CD8-positive, alpha-beta T cell (primary cell): ENCODE measurements at regions of chr16 and their contacts with region 1.

Region 1: GRCh38 chr16:48164907-48165726 is 9.3 kb upstream of the ABCC12 start:
- DNase-seq: peak; percentile 40 to 80 (median 66)
- ATAC-seq: no peak
- H3K4me3 ChIP-seq: no peak overlapping the region
- H3K4me3 Mint-ChIP-seq: no peak overlapping the region
- H3K27ac ChIP-seq: no peak overlapping the region
- H3K27ac Mint-ChIP-seq: no peak overlapping the region
- H3K4me1 ChIP-seq: no peaks in the 10 kb centered on the region
- H3K4me1 Mint-ChIP-seq: peaks cover 4% of the 10 kb centered on the region
- H3K27me3 ChIP-seq: no peaks in the 10 kb centered on the region
- H3K27me3 Mint-ChIP-seq: peaks cover 8% of the 10 kb centered on the region
- CTCF ChIP-seq: peak; percentile 83

Region 2: DNA sequence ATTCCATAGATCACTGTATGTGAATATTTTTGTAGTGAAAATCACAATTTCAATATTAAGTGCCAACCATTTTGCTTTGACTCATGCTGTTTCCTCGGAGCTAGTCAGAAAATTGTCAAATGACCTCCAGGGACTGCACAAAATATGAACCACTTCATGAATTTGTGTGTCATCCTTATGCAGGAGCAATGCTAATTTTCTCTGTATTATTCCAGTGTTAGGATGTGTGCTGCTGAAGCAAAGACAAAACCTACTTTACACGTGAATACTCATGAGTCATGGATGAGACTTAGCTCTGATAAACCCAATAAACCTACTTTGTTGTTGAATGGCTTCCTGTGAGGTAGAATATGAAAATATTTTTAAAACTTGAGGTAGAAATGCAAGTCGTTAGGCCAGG is 1609.2 kb before region 1 on chr16:
- CTCF ChIA-PET with region 1: interaction called, 5 read pairs
- POLR2A ChIA-PET with region 1: no interaction called
- intact Hi-C with region 1: loop called in 1 of 2 experiments (anchors 10 kb)
- DNase-seq: no peak
- ATAC-seq: no peak
- H3K4me3 ChIP-seq: no peak overlapping the region
- H3K4me3 Mint-ChIP-seq: no peak overlapping the region
- H3K27ac ChIP-seq: no peak overlapping the region
- H3K27ac Mint-ChIP-seq: no peak overlapping the region
- H3K4me1 ChIP-seq: no peaks in the 10 kb centered on the region
- H3K4me1 Mint-ChIP-seq: peaks cover 6% of the 10 kb centered on the region
- H3K27me3 ChIP-seq: no peaks in the 10 kb centered on the region
- H3K27me3 Mint-ChIP-seq: peaks cover 17% of the 10 kb centered on the region
- CTCF ChIP-seq: no peak

Region 3: DNA sequence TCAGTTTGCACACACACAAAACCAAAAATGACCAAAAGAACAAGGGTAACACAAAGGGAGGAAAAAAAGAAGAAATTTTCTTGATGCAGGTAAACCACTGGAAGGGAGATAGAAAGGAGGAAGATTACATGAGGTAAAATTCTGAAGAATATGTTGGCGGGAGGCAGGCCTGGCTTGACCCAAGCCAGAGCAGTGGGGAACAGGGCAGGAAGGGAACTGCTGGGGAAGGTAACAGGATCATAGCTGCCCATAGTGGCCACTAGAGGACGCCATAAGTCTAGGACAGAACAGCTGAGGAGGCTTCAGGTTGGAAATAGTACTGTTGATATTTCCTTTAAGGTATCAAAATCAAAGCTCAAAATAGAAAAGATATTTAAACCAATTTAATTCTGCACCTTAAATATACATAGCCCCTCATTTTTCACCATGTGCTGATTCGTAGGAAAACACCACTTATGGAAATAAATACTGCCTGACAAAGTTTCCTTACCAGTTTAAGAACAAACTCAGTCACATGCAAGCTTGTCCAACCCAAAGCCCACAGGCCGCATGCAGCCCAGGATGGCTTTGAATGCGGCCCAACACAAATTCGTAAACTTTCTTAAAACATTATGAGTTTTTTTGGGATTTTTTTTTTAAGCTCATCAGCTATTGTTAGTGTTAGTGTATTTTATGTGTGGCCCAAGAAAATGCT is 1491.7 kb before region 1 on chr16:
- CTCF ChIA-PET with region 1: no interaction called
- POLR2A ChIA-PET with region 1: no interaction called
- intact Hi-C with region 1: loop called in 1 of 2 experiments (anchors 10 kb)
- DNase-seq: peak in 8 of 9 experiments; percentile 17 to 76 (median 48)
- ATAC-seq: peak; percentile 95
- H3K4me3 ChIP-seq: no peak overlapping the region
- H3K4me3 Mint-ChIP-seq: no peak overlapping the region
- H3K27ac ChIP-seq: no peak overlapping the region
- H3K27ac Mint-ChIP-seq: no peak overlapping the region
- H3K4me1 ChIP-seq: no peaks in the 10 kb centered on the region
- H3K4me1 Mint-ChIP-seq: peaks cover 2% of the 10 kb centered on the region
- H3K27me3 ChIP-seq: no peaks in the 10 kb centered on the region
- H3K27me3 Mint-ChIP-seq: no peaks in the 10 kb centered on the region
- CTCF ChIP-seq: peak; percentile 95

Region 4: GRCh38 chr16:46947900-46948547 is 1217.1 kb before region 1 on chr16:
- CTCF ChIA-PET with region 1: interaction called, 12 read pairs
- POLR2A ChIA-PET with region 1: no interaction called
- intact Hi-C with region 1: loop called (anchors 1 kb)
- DNase-seq: peak in 4 of 9 experiments; percentile 24 to 63 (median 44)
- ATAC-seq: peak; percentile 72
- H3K4me3 ChIP-seq: no peak overlapping the region
- H3K4me3 Mint-ChIP-seq: no peak overlapping the region
- H3K27ac ChIP-seq: no peak overlapping the region
- H3K27ac Mint-ChIP-seq: no peak overlapping the region
- H3K4me1 ChIP-seq: no peaks in the 10 kb centered on the region
- H3K4me1 Mint-ChIP-seq: peaks cover 1% of the 10 kb centered on the region
- H3K27me3 ChIP-seq: no peaks in the 10 kb centered on the region
- H3K27me3 Mint-ChIP-seq: no peaks in the 10 kb centered on the region
- CTCF ChIP-seq: peak; percentile 71

Region 5: GRCh38 chr16:47037746-47038458 is 1127.2 kb before region 1 on chr16:
- CTCF ChIA-PET with region 1: interaction called, 13 read pairs
- POLR2A ChIA-PET with region 1: interaction called, 3 read pairs
- intact Hi-C with region 1: loop called (anchors 1 to 2 kb)
- DNase-seq: peak; percentile 80 to 95 (median 88)
- ATAC-seq: peak; percentile 98
- H3K4me3 ChIP-seq: peak overlapping the region; percentile 65 to 72
- H3K4me3 Mint-ChIP-seq: peak overlapping the region; percentile 79
- H3K27ac ChIP-seq: no peak overlapping the region
- H3K27ac Mint-ChIP-seq: no peak overlapping the region
- H3K4me1 ChIP-seq: peaks cover 7% of the 10 kb centered on the region
- H3K4me1 Mint-ChIP-seq: peaks cover 5% of the 10 kb centered on the region
- H3K27me3 ChIP-seq: peaks cover 0 to 12% of the 10 kb centered on the region in 2 experiments
- H3K27me3 Mint-ChIP-seq: peaks cover 3% of the 10 kb centered on the region
- CTCF ChIP-seq: peak; percentile 88

Region 6: DNA sequence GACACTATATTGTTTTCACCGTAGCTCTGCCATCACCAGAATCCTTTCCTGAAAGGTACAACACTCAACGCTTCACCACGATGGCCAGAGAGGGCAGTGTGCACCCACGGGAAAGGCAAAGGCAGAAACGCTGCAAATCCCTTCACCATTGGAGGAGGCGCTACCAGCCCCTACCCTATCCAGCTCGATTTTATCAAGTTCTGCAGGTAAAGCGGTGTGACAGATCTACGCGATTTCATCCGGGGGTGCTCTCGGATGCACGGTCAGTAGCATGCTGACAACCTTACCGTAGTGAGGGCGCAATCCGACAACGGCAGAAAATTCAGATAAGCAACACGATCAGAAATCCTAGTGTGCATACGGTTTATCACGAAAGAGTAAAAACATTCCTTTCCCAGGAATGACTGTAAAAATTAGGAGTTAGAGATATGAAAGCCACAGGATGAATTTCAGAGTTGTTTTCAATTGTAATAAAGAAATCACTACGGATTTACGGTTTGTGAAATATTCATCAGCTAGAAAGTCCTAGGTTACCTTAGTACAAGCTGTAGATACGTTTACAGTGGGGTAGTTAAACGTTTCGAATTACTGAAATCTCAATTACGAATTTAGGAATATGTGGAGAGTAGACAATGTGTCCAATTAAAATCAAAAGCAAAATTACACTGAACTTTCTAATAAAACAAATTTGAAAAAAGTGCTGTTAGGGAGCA is 1023.2 kb before region 1 on chr16:
- CTCF ChIA-PET with region 1: interaction called, 36 read pairs
- POLR2A ChIA-PET with region 1: no interaction called
- intact Hi-C with region 1: loop called (anchors 2 kb)
- DNase-seq: peak; percentile 63 to 87 (median 80)
- ATAC-seq: peak; percentile 77
- H3K4me3 ChIP-seq: peak overlapping the region; percentile 3 to 28
- H3K4me3 Mint-ChIP-seq: peak overlapping the region; percentile 76
- H3K27ac ChIP-seq: no peak overlapping the region
- H3K27ac Mint-ChIP-seq: no peak overlapping the region
- H3K4me1 ChIP-seq: peaks cover 12% of the 10 kb centered on the region
- H3K4me1 Mint-ChIP-seq: peaks cover 21% of the 10 kb centered on the region
- H3K27me3 ChIP-seq: peaks cover 3 to 5% of the 10 kb centered on the region in 2 experiments
- H3K27me3 Mint-ChIP-seq: peaks cover 22% of the 10 kb centered on the region
- CTCF ChIP-seq: peak; percentile 85

Region 7: DNA sequence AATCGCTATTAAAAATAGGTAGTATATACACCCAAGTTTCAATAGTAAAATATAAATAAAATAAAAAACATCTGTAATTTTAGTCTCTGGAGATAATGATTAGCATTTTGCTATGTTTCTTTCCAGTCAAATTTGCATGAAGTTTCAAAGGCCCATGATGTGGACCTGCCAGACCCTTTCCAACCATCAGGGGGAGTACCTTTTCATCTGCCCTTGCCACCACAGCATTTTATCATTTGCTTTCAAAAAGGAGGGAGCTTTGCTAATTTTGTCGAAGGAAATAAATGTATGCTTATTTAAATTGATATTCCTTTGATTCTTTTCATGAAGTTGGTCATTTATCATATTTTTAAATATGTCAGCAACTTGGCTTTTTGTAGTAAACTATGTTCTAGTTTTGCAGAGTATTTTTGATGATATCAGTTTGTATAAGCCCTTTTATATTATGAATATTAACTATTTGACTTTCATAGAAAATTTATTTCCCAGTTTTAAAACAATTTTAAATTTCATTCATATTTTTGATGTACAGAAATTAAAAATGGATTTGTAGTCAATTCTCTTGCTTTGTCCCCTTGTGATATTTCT is 906.1 kb before region 1 on chr16:
- CTCF ChIA-PET with region 1: no interaction called
- POLR2A ChIA-PET with region 1: no interaction called
- intact Hi-C with region 1: loop called in 1 of 2 experiments (anchors 2 kb)
- DNase-seq: peak in 2 of 9 experiments; percentile 16 to 18
- ATAC-seq: no peak
- H3K4me3 ChIP-seq: no peak overlapping the region
- H3K4me3 Mint-ChIP-seq: no peak overlapping the region
- H3K27ac ChIP-seq: no peak overlapping the region
- H3K27ac Mint-ChIP-seq: no peak overlapping the region
- H3K4me1 ChIP-seq: no peaks in the 10 kb centered on the region
- H3K4me1 Mint-ChIP-seq: no peaks in the 10 kb centered on the region
- H3K27me3 ChIP-seq: no peaks in the 10 kb centered on the region
- H3K27me3 Mint-ChIP-seq: no peaks in the 10 kb centered on the region
- CTCF ChIP-seq: peak; percentile 48

Region 8: GRCh38 chr16:47939690-47940089 is 225.4 kb before region 1 on chr16:
- CTCF ChIA-PET with region 1: no interaction called
- POLR2A ChIA-PET with region 1: no interaction called
- intact Hi-C with region 1: no loop called
- DNase-seq: no peak
- ATAC-seq: no peak
- H3K4me3 ChIP-seq: no peak overlapping the region
- H3K4me3 Mint-ChIP-seq: no peak overlapping the region
- H3K27ac ChIP-seq: no peak overlapping the region
- H3K27ac Mint-ChIP-seq: no peak overlapping the region
- H3K4me1 ChIP-seq: no peaks in the 10 kb centered on the region
- H3K4me1 Mint-ChIP-seq: no peaks in the 10 kb centered on the region
- H3K27me3 ChIP-seq: no peaks in the 10 kb centered on the region
- H3K27me3 Mint-ChIP-seq: peaks cover 2% of the 10 kb centered on the region
- CTCF ChIP-seq: no peak

Region 9: GRCh38 chr16:48136547-48137360 is 28.4 kb before region 1 on chr16:
- CTCF ChIA-PET with region 1: no interaction called
- POLR2A ChIA-PET with region 1: no interaction called
- intact Hi-C with region 1: no loop called
- DNase-seq: no peak
- ATAC-seq: no peak
- H3K4me3 ChIP-seq: no peak overlapping the region
- H3K4me3 Mint-ChIP-seq: no peak overlapping the region
- H3K27ac ChIP-seq: no peak overlapping the region
- H3K27ac Mint-ChIP-seq: no peak overlapping the region
- H3K4me1 ChIP-seq: no peaks in the 10 kb centered on the region
- H3K4me1 Mint-ChIP-seq: no peaks in the 10 kb centered on the region
- H3K27me3 ChIP-seq: no peaks in the 10 kb centered on the region
- H3K27me3 Mint-ChIP-seq: peaks cover under 1% of the 10 kb centered on the region
- CTCF ChIP-seq: no peak